Endothelial cell of umbilical vein (primary cell): ENCODE measurements at regions of chr4 and their contacts with region 1.

Region 1: GRCh38 chr4:88533937-88534750 is 10.6 kb upstream of the PYURF start:
- DNase-seq: peak; percentile 83
- H3K4me3 ChIP-seq: peak overlapping the region in 1 of 3 experiments; percentile 35
- H3K27ac ChIP-seq: peak overlapping the region; percentile 98
- H3K4me1 ChIP-seq: peaks cover 38% of the 10 kb centered on the region
- H3K27me3 ChIP-seq: no peaks in the 10 kb centered on the region
- CTCF ChIP-seq: no peak
- POLR2A ChIP-seq: no peak

Region 2: DNA sequence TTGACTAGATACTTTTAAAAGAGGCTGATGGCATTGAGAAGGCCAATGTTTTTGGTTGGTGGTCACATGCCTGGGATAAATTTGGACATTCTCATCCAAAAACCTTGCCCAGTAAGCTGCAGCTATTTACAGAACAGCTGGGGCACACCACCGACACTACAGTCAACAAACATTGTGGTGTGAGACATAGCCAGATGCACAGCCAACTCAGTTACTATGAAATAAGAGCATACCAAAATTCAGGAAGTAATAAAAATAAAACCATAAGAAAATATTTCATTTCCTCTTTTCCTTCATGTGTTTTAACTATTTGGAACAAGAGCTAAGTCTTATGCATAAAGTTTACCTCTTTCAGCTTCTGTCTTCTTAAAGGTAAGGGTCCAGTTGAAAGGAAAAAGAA is 258.6 kb before region 1 on chr4:
- CTCF ChIA-PET with region 1: no interaction called
- POLR2A ChIA-PET with region 1: no interaction called
- dilution Hi-C with region 1: no loop called
- intact Hi-C with region 1: no loop called
- DNase-seq: no peak
- H3K4me3 ChIP-seq: no peak overlapping the region
- H3K27ac ChIP-seq: no peak overlapping the region
- H3K4me1 ChIP-seq: no peaks in the 10 kb centered on the region
- H3K27me3 ChIP-seq: no peaks in the 10 kb centered on the region
- CTCF ChIP-seq: no peak
- POLR2A ChIP-seq: no peak

Region 3: GRCh38 chr4:88523325-88524129 is 10.6 kb before region 1 on chr4 and contains the start of gene PYURF:
- CTCF ChIA-PET with region 1: interaction called, 29 read pairs
- POLR2A ChIA-PET with region 1: no interaction called
- dilution Hi-C with region 1: no loop called
- intact Hi-C with region 1: loop called (anchors 1 kb)
- DNase-seq: peak; percentile 95
- H3K4me3 ChIP-seq: peak within 1 kb of the TSS; percentile 91 to 93 (median 92)
- H3K27ac ChIP-seq: peak within 1 kb of the TSS; percentile 86
- H3K4me1 ChIP-seq: peaks cover 16% of the 10 kb centered on the region
- H3K27me3 ChIP-seq: no peaks in the 10 kb centered on the region
- CTCF ChIP-seq: no peak
- POLR2A ChIP-seq: peak; percentile 95
- total RNA-seq, gene PYURF: 79.7 and 81.8 TPM in 2 replicates

Region 4: DNA sequence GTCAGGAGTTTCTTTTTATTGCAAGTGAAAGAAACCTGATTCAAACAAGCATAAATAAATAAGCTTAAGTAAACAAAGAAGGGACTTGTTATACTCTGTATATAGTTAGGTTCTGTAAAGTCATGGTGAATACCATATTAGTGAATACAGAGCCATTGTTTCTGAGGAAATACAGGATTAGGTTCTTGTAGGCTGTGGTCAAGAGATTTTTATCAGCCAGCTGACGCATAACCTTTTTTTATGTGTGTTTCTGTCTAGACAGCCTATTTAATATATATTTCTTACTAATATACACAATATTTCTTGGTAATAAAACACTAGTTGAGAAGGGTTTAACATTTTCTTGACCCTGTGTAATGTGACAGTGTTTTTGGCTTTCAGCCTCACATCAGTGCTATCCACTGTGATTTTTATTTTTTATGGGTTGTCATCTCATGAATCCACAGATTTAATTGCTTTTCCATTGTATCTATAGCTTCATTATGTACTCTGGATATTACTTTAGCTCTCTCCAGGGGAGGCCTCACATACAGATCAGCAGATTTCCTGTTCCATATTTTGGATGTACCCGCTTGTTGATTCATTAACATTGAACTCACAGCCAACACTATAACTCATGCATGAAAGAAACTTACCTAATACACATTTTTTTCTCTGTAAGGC is 66.2 kb after region 1 on chr4:
- CTCF ChIA-PET with region 1: interaction called, 13 read pairs
- POLR2A ChIA-PET with region 1: no interaction called
- dilution Hi-C with region 1: no loop called
- intact Hi-C with region 1: loop called (anchors 1 kb)
- DNase-seq: peak; percentile 92
- H3K4me3 ChIP-seq: peak overlapping the region in 2 of 3 experiments; percentile 4 to 21
- H3K27ac ChIP-seq: peak overlapping the region; percentile 100
- H3K4me1 ChIP-seq: peaks cover 32% of the 10 kb centered on the region
- H3K27me3 ChIP-seq: no peaks in the 10 kb centered on the region
- CTCF ChIP-seq: no peak
- POLR2A ChIP-seq: peak; percentile 27

Region 5: GRCh38 chr4:88653371-88653946 is 119.3 kb after region 1 on chr4:
- CTCF ChIA-PET with region 1: interaction called, 37 read pairs
- POLR2A ChIA-PET with region 1: no interaction called
- dilution Hi-C with region 1: no loop called
- intact Hi-C with region 1: no loop called
- DNase-seq: no peak
- H3K4me3 ChIP-seq: no peak overlapping the region
- H3K27ac ChIP-seq: no peak overlapping the region
- H3K4me1 ChIP-seq: no peaks in the 10 kb centered on the region
- H3K27me3 ChIP-seq: no peaks in the 10 kb centered on the region
- CTCF ChIP-seq: no peak
- POLR2A ChIP-seq: no peak

Region 6: DNA sequence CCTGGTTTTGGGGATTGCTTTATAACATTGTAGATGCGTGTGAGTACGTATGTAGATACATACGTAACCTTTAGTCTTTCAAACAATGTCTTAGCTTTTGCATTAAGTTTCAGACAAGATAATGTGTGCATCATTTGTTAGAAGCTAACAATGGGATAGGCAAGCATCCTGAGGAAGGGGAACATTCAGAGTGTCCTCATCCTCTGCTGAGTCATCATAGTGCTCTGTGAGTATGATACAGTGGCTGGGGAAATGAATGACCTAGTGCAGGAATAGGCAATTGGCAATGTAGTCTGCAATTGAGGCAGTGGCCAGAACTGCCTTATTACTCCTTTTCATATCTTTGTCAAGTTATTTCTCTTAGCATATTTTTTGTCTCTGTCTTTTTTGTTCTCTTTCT is 156.2 kb after region 1 on chr4:
- CTCF ChIA-PET with region 1: no interaction called
- POLR2A ChIA-PET with region 1: no interaction called
- dilution Hi-C with region 1: no loop called
- intact Hi-C with region 1: no loop called
- DNase-seq: peak; percentile 50
- H3K4me3 ChIP-seq: no peak overlapping the region
- H3K27ac ChIP-seq: no peak overlapping the region
- H3K4me1 ChIP-seq: peaks cover 7% of the 10 kb centered on the region
- H3K27me3 ChIP-seq: no peaks in the 10 kb centered on the region
- CTCF ChIP-seq: no peak
- POLR2A ChIP-seq: no peak

Region 7: DNA sequence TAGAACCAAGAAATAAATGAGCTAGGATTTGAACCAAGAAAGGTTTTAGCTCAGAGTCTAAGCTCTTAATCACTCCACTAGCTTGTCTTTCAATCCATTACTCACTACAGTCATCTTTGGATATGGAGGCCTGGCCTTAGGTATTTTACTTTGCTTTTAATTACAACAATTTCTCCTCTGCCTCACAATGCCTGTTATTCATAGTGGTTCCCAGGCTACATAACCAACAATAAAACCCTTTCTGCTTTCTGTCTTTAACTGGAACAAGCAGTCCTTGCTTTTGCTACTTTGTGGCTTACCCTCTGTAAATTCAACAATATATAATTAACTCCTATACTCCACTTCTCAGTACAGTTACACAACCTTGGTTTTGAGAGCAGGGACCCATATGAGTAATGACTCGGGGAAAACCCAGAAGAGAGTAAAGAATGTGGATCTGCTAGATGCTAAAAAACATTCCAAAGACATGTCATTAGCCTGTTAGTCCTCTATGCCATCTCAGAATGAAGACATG is 258.2 kb after region 1 on chr4:
- CTCF ChIA-PET with region 1: interaction called, 72 read pairs
- POLR2A ChIA-PET with region 1: no interaction called
- dilution Hi-C with region 1: no loop called
- intact Hi-C with region 1: loop called (anchors 5 kb)
- DNase-seq: no peak
- H3K4me3 ChIP-seq: no peak overlapping the region
- H3K27ac ChIP-seq: no peak overlapping the region
- H3K4me1 ChIP-seq: no peaks in the 10 kb centered on the region
- H3K27me3 ChIP-seq: no peaks in the 10 kb centered on the region
- CTCF ChIP-seq: no peak
- POLR2A ChIP-seq: no peak

Region 8: GRCh38 chr4:89110986-89111832 is 577.1 kb after region 1 on chr4 and contains the start of gene TIGD2:
- CTCF ChIA-PET with region 1: no interaction called
- POLR2A ChIA-PET with region 1: no interaction called
- dilution Hi-C with region 1: no loop called
- intact Hi-C with region 1: loop called (anchors 10 kb)
- DNase-seq: peak; percentile 84
- H3K4me3 ChIP-seq: peak within 1 kb of the TSS; percentile 58 to 82 (median 59)
- H3K27ac ChIP-seq: peak within 1 kb of the TSS; percentile 40
- H3K4me1 ChIP-seq: peaks cover 13% of the 10 kb centered on the region
- H3K27me3 ChIP-seq: peaks cover 12 to 15% of the 10 kb centered on the region in 2 experiments
- CTCF ChIP-seq: peak; percentile 64 to 85
- POLR2A ChIP-seq: peak; percentile 73
- total RNA-seq, gene TIGD2: 4.2 and 5.0 TPM in 2 replicates